Activated naive CD4-positive, alpha-beta T cell treated with anti-CD3 and anti-CD28 coated beads for 36 hours (primary cell): ENCODE measurements at regions of chr22 and their contacts with region 1.

Region 1: GRCh38 chr22:50582562-50583293 is at the start of gene CHKB:
- DNase-seq: peak; percentile 99
- H3K4me3 Mint-ChIP-seq: peak within 1 kb of the TSS; percentile 91
- H3K27ac Mint-ChIP-seq: peak within 1 kb of the TSS; percentile 82
- H3K4me1 Mint-ChIP-seq: peaks cover 31% of the 10 kb centered on the region
- H3K27me3 Mint-ChIP-seq: no peaks in the 10 kb centered on the region
- total RNA-seq, gene CHKB: 71.0 to 81.4 TPM

Region 2: GRCh38 chr22:50118557-50119168 is 464.1 kb before region 1 on chr22:
- CTCF ChIA-PET with region 1: no interaction called
- intact Hi-C with region 1: no loop called
- DNase-seq: no peak
- H3K4me3 Mint-ChIP-seq: no peak overlapping the region
- H3K27ac Mint-ChIP-seq: no peak overlapping the region
- H3K4me1 Mint-ChIP-seq: no peaks in the 10 kb centered on the region
- H3K27me3 Mint-ChIP-seq: peaks cover 5% of the 10 kb centered on the region

Region 3: DNA sequence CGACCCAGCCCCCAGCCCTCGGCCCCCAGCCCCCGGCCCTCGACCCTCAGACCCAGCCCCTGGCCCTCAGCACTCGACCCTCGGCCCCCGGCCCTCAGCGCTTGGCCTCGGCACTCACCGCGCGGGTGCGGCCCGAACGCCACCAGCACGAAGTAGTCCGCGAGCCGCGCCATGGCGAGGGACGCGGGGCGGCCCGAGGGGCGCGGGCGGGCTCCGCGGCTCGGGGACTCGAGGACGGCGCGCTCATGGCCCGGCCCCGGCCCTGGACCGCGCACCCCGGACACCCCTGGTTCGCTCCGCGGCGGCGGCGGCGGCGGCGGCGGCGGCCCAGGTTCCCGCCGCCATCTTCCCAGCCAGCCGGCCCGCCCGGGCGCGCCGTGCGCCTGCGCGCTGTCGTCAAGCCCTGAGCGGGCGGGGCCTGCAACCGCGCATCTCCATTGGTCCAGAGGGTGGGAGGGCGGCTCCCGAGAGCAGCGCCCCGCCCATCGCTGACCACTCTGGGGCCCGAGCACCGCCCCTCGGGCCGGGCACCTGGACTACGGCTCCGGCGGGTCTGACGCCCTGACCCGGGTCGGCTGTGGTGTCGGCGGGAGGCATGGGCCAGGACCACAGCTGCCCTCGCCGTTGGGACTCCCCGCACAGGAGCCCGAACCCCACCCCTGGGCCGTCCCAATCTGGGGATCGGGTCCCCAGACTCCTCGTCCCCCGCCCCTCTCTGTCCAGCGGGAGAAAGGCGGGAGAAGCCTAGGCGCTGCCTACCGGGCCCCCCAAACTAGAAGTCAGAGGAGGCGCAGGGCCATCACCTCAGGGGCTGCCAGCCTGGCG is 107.8 kb before region 1 on chr22 and contains the start of gene SBF1:
- CTCF ChIA-PET with region 1: no interaction called
- intact Hi-C with region 1: no loop called
- DNase-seq: peak; percentile 90
- H3K4me3 Mint-ChIP-seq: peak within 1 kb of the TSS; percentile 95
- H3K27ac Mint-ChIP-seq: peak within 1 kb of the TSS; percentile 87
- H3K4me1 Mint-ChIP-seq: peaks cover 46% of the 10 kb centered on the region
- H3K27me3 Mint-ChIP-seq: peaks cover 3% of the 10 kb centered on the region
- total RNA-seq, gene SBF1: 100 TPM

Region 4: DNA sequence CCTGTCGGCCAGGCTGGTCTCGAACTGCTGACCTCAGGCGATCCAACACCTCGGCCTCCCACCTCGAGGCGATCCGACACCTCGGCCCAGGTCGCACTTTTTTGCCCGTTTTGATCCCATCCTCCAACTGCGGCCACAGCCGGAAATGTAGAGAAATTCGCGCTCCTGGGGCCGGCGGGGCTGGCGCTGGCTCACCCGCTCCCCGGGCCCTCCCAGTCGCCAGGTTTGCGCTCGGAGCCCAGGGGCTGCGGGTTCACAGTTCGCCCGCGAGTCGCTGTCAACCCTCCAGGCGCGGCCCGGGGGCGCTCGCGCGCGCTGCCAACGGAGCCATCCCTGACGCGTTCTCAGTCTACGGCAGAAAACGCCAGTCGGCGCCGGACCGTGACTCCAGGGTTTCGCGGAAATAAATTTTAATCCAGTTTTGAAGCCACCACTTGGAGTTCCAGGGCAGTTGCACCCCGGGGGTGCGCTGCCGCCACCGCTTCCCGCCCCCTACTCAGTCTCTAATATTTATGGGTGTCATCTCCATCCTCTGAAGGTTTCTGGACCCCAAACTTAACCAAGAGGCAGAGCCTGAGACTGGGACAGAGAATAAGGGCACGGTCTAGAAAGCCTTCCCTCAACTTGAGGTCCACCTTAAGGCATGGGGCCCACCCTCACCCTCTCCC is 38.5 kb before region 1 on chr22:
- CTCF ChIA-PET with region 1: interaction called, 3 read pairs
- intact Hi-C with region 1: loop called (anchors 1 kb)
- DNase-seq: peak; percentile 92
- H3K4me3 Mint-ChIP-seq: peak overlapping the region; percentile 62
- H3K27ac Mint-ChIP-seq: peak overlapping the region; percentile 72
- H3K4me1 Mint-ChIP-seq: peaks cover 60% of the 10 kb centered on the region
- H3K27me3 Mint-ChIP-seq: no peaks in the 10 kb centered on the region

Region 5: GRCh38 chr22:50627642-50628542 is 45.2 kb after region 1 on chr22 and contains the start of gene ARSA:
- CTCF ChIA-PET with region 1: no interaction called
- intact Hi-C with region 1: no loop called
- DNase-seq: peak; percentile 81
- H3K4me3 Mint-ChIP-seq: peak within 1 kb of the TSS; percentile 84
- H3K27ac Mint-ChIP-seq: peak within 1 kb of the TSS; percentile 56
- H3K4me1 Mint-ChIP-seq: peaks cover 17% of the 10 kb centered on the region
- H3K27me3 Mint-ChIP-seq: no peaks in the 10 kb centered on the region
- total RNA-seq, gene ARSA: 17.8 to 19.2 TPM

Region 6: DNA sequence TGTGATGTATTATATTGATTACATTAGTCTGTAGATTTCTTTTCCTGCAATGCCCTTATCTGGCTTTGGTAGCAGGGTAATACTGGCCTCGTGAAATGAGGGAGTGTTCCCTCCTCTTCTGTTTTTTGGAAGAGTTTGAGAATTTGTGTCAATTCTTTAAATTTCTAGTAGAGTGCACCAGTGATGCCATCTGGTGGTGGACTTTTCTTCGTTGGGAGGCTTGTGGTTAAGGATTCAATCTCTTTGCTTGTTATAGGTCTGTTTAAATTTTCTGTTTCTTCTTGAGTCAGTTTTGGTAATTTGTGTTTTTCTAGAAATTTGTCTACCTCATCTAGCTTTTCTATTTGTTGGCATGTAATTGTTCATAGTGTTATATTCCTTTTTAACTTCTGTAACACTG is 108.8 kb after region 1 on chr22:
- CTCF ChIA-PET with region 1: no interaction called
- intact Hi-C with region 1: loop called (anchors 1 kb)
- DNase-seq: peak; percentile 75
- H3K4me3 Mint-ChIP-seq: no peak overlapping the region
- H3K27ac Mint-ChIP-seq: no peak overlapping the region
- H3K4me1 Mint-ChIP-seq: peaks cover 4% of the 10 kb centered on the region
- H3K27me3 Mint-ChIP-seq: peaks cover 3% of the 10 kb centered on the region